Left colon (tissue), 2 donors: ENCODE measurements at regions of chr5 and their contacts with region 1.

Region 1: GRCh38 chr5:67246108-67246507 is 49.5 kb upstream of the CD180 start:
- DNase-seq: no peak
- ATAC-seq: peak; percentile 60

Region 2: DNA sequence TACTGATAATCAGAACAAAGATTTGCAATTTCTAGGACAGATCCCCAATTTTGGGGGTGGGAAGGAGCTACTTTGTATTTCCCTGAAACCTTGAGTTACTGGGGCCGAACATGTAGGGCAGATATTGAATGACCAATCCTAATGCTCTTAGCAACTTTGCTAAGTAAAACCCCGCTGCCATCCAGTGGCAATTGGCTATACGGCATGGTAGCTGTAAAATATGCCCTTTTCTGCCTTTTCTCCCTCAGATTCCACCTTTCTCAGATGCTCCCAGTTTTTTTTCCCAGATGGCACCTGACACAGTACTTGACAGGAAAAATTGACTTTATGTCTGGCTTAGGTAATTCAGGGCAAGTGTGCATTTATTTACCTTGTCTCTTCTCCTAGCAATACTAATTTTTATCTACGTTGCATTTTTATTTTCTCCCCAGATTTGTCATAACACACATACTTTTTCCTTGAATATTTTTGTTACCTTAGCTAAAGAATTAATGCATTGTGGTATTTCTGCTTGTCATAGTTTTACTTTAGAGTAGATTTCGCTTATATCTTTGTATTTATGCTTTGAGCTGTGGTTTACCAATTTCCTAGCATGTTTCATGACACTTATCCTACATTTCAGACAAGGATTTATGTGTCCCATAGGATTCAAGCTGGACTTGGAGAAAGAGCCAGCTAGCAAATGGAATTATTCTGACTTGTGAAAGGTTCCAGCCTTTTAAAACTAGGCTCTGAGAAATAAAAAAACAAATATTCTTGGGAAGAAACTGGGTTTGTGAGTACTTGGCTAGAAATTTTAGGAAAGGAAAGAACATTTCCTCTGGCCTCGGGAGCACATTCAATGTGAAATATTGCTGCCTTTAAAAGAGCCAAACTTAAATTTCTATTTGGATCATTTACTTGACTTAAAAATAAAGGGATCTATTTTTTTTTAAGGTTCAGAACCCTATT is 1006.8 kb after region 1 on chr5:
- intact Hi-C with region 1: loop called in 1 of 2 experiments (anchors 5 kb)
- DNase-seq: peak; percentile 54 to 62
- ATAC-seq: peak; percentile 83